ENCODE measurements at regions of chr7 and their contacts with region 1.

Region 1: GRCh38 chr7:12570534-12571461 is at the start of gene SCIN:
- DNase-seq: peak; percentile 77
- H3K4me3 Mint-ChIP-seq: peak within 1 kb of the TSS; percentile 83
- H3K27ac Mint-ChIP-seq: peak within 1 kb of the TSS; percentile 76
- H3K4me1 Mint-ChIP-seq: peaks cover 33% of the 10 kb centered on the region
- H3K27me3 Mint-ChIP-seq: no peaks in the 10 kb centered on the region
- CTCF ChIP-seq: no peak
- total RNA-seq, gene SCIN: 22.6 and 28.3 TPM in 2 replicates

Region 2: GRCh38 chr7:12557282-12557681 is 13.5 kb before region 1 on chr7:
- CTCF ChIA-PET with region 1: interaction called, 12 read pairs
- intact Hi-C with region 1: no loop called
- DNase-seq: peak; percentile 81
- H3K4me3 Mint-ChIP-seq: peak overlapping the region; percentile 15
- H3K27ac Mint-ChIP-seq: peak overlapping the region; percentile 80
- H3K4me1 Mint-ChIP-seq: peaks cover 33% of the 10 kb centered on the region
- H3K27me3 Mint-ChIP-seq: no peaks in the 10 kb centered on the region
- CTCF ChIP-seq: no peak